ENCODE measurements at regions of chr4 and their contacts with region 1.

Region 1: DNA sequence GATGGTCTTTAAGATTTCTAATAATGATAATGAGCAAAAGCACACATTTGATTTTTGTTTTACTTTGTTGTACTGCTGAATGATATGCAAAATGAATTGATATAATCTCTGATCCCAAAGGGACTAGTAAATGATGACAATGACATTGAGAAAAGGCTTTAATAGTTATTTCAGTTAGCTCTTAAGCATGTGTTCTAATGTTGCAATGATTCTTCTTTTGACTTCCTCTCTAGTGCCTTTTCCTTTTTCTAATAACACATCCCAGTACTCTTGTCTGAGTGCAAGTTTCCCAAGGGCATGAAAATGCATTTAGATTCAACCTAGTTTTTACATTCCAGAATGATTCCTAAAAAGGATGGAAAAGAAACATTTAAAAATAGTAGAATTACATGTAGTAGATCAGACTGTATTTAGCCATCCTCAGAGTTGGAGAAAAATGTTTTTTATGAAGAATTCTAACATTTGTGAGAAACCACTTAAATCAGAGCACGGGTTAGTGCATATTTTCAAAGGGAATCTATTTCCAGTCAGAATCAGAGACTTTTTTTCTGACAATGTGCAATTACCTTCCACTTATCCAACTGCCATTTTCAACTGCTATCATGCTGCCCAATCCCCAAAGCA is 508.8 kb downstream of the C4orf33 start:
- DNase-seq: no peak
- H3K4me3 ChIP-seq: no peak overlapping the region
- H3K27ac ChIP-seq: no peak overlapping the region
- H3K4me1 ChIP-seq: no peaks in the 10 kb centered on the region
- H3K27me3 ChIP-seq: no peaks in the 10 kb centered on the region
- CTCF ChIP-seq: no peak
- EP300 ChIP-seq: no peak
- POLR2A ChIP-seq: no peak

Region 2: GRCh38 chr4:130322439-130322838 is 717.7 kb after region 1 on chr4:
- in situ Hi-C with region 1: no loop called
- intact Hi-C with region 1: loop called (anchors 5 kb)
- DNase-seq: no peak
- H3K4me3 ChIP-seq: no peak overlapping the region
- H3K27ac ChIP-seq: no peak overlapping the region
- H3K4me1 ChIP-seq: no peaks in the 10 kb centered on the region
- H3K27me3 ChIP-seq: no peaks in the 10 kb centered on the region
- CTCF ChIP-seq: no peak
- EP300 ChIP-seq: no peak
- POLR2A ChIP-seq: no peak

Measured in transverse colon (tissue), 4 donors.